T-cell (primary cell): ENCODE measurements at regions of chr4 and their contacts with region 1.

Region 1: GRCh38 chr4:71009890-71010588 is 16.6 kb downstream of the DCK start:
- DNase-seq: peak in 2 of 35 experiments; percentile 10 to 73
- ATAC-seq: peak in 3 of 4 experiments; percentile 68 to 78 (median 71)
- H3K4me3 ChIP-seq: no peak overlapping the region
- H3K4me3 Mint-ChIP-seq: no peak overlapping the region
- H3K27ac ChIP-seq: no peak overlapping the region
- H3K27ac Mint-ChIP-seq: peak overlapping the region; percentile 13 to 63
- H3K4me1 ChIP-seq: peaks cover 17 to 24% of the 10 kb centered on the region in 2 experiments
- H3K4me1 Mint-ChIP-seq: peaks cover 46 to 58% (median 52%) of the 10 kb centered on the region in 3 donors
- H3K27me3 ChIP-seq: no peaks in the 10 kb centered on the region
- H3K27me3 Mint-ChIP-seq: no peaks in the 10 kb centered on the region

Region 2: DNA sequence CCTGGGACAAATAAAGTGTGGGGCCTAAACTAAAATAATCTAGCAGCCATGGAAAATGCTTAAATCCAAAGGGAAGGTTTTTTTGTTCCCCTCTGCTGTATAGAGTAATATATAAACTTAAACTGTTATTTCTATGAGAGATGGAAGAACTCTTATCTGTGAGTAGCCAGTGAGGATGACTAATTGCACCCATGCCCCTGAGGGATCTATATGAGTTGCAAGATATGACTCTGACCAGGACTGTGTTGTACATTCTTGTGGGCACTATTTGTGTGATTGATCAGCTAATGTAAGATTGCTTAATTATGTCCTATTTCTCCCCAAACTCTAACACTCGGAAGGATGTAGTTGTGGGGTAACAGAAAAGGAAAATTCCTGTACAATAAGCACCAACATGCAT is 453.2 kb before region 1 on chr4:
- CTCF ChIA-PET with region 1: interaction called in 1 of 2 experiments, 14 read pairs
- POLR2A ChIA-PET with region 1: no interaction called
- DNase-seq: no peak
- ATAC-seq: no peak
- H3K4me3 ChIP-seq: no peak overlapping the region
- H3K4me3 Mint-ChIP-seq: no peak overlapping the region
- H3K27ac ChIP-seq: no peak overlapping the region
- H3K27ac Mint-ChIP-seq: no peak overlapping the region
- H3K4me1 ChIP-seq: no peaks in the 10 kb centered on the region
- H3K4me1 Mint-ChIP-seq: peaks cover 7 to 13% (median 10%) of the 10 kb centered on the region in 3 donors
- H3K27me3 ChIP-seq: no peaks in the 10 kb centered on the region
- H3K27me3 Mint-ChIP-seq: peaks cover 2 to 3% of the 10 kb centered on the region in 2 donors

Region 3: GRCh38 chr4:70601422-70602039 is 408.5 kb before region 1 on chr4:
- CTCF ChIA-PET with region 1: interaction called in 1 of 2 experiments, 22 read pairs
- POLR2A ChIA-PET with region 1: interaction called in 1 of 2 experiments, 6 read pairs
- DNase-seq: peak; percentile 18 to 79 (median 57)
- ATAC-seq: peak; percentile 73 to 89 (median 77)
- H3K4me3 ChIP-seq: no peak overlapping the region
- H3K4me3 Mint-ChIP-seq: no peak overlapping the region
- H3K27ac ChIP-seq: no peak overlapping the region
- H3K27ac Mint-ChIP-seq: no peak overlapping the region
- H3K4me1 ChIP-seq: no peaks in the 10 kb centered on the region
- H3K4me1 Mint-ChIP-seq: no peaks in the 10 kb centered on the region
- H3K27me3 ChIP-seq: peaks cover 0 to 6% of the 10 kb centered on the region in 2 experiments
- H3K27me3 Mint-ChIP-seq: peaks cover 0 to 7% of the 10 kb centered on the region in 2 donors

Region 4: GRCh38 chr4:70651864-70652506 is 358.1 kb before region 1 on chr4:
- CTCF ChIA-PET with region 1: interaction called, 6 to 13 read pairs
- POLR2A ChIA-PET with region 1: no interaction called
- DNase-seq: peak in 4 of 35 experiments; percentile 4 to 53 (median 12)
- ATAC-seq: peak in 3 of 4 experiments; percentile 46 to 66 (median 49)
- H3K4me3 ChIP-seq: no peak overlapping the region
- H3K4me3 Mint-ChIP-seq: no peak overlapping the region
- H3K27ac ChIP-seq: no peak overlapping the region
- H3K27ac Mint-ChIP-seq: no peak overlapping the region
- H3K4me1 ChIP-seq: no peaks in the 10 kb centered on the region
- H3K4me1 Mint-ChIP-seq: peaks cover 0 to 4% (median 4%) of the 10 kb centered on the region in 3 donors
- H3K27me3 ChIP-seq: no peaks in the 10 kb centered on the region
- H3K27me3 Mint-ChIP-seq: no peaks in the 10 kb centered on the region

Region 5: GRCh38 chr4:70984589-70984988 is 25.4 kb before region 1 on chr4:
- CTCF ChIA-PET with region 1: interaction called, 11 to 37 read pairs
- POLR2A ChIA-PET with region 1: interaction called in 1 of 2 experiments, 3 read pairs
- DNase-seq: peak in 1 of 35 experiments; percentile 46
- ATAC-seq: peak in 2 of 4 experiments; percentile 24 to 60
- H3K4me3 ChIP-seq: no peak overlapping the region
- H3K4me3 Mint-ChIP-seq: no peak overlapping the region
- H3K27ac ChIP-seq: no peak overlapping the region
- H3K27ac Mint-ChIP-seq: no peak overlapping the region
- H3K4me1 ChIP-seq: no peaks in the 10 kb centered on the region
- H3K4me1 Mint-ChIP-seq: peaks cover 0 to 2% (median 0%) of the 10 kb centered on the region in 3 donors
- H3K27me3 ChIP-seq: no peaks in the 10 kb centered on the region
- H3K27me3 Mint-ChIP-seq: no peaks in the 10 kb centered on the region

Region 6: GRCh38 chr4:70993181-70994068 is 16.6 kb before region 1 on chr4 and contains the start of gene DCK:
- CTCF ChIA-PET with region 1: interaction called, 15 to 42 read pairs
- POLR2A ChIA-PET with region 1: interaction called, 5 to 6 read pairs
- DNase-seq: peak; percentile 64 to 90 (median 76)
- ATAC-seq: peak; percentile 84 to 89 (median 88)
- H3K4me3 ChIP-seq: peak within 1 kb of the TSS; percentile 93
- H3K4me3 Mint-ChIP-seq: peak within 1 kb of the TSS; percentile 97 to 100 (median 97)
- H3K27ac ChIP-seq: peak within 1 kb of the TSS; percentile 77
- H3K27ac Mint-ChIP-seq: peak within 1 kb of the TSS; percentile 95 to 97
- H3K4me1 ChIP-seq: peaks cover 19 to 27% of the 10 kb centered on the region in 2 experiments
- H3K4me1 Mint-ChIP-seq: peaks cover 41 to 52% (median 47%) of the 10 kb centered on the region in 3 donors
- H3K27me3 ChIP-seq: no peaks in the 10 kb centered on the region
- H3K27me3 Mint-ChIP-seq: no peaks in the 10 kb centered on the region
- total RNA-seq, gene DCK: 25.9 to 50.7 (median 42.1) TPM

Region 7: GRCh38 chr4:71026086-71026485 is 16.0 kb after region 1 on chr4:
- CTCF ChIA-PET with region 1: interaction called, 6 to 14 read pairs
- POLR2A ChIA-PET with region 1: interaction called in 1 of 2 experiments, 5 read pairs
- DNase-seq: no peak
- ATAC-seq: no peak
- H3K4me3 ChIP-seq: no peak overlapping the region
- H3K4me3 Mint-ChIP-seq: no peak overlapping the region
- H3K27ac ChIP-seq: no peak overlapping the region
- H3K27ac Mint-ChIP-seq: no peak overlapping the region
- H3K4me1 ChIP-seq: no peaks in the 10 kb centered on the region
- H3K4me1 Mint-ChIP-seq: peaks cover 7 to 21% (median 17%) of the 10 kb centered on the region in 3 donors
- H3K27me3 ChIP-seq: no peaks in the 10 kb centered on the region
- H3K27me3 Mint-ChIP-seq: no peaks in the 10 kb centered on the region